ENCODE measurements at regions of chr13 and their contacts with region 1.

Region 1: DNA sequence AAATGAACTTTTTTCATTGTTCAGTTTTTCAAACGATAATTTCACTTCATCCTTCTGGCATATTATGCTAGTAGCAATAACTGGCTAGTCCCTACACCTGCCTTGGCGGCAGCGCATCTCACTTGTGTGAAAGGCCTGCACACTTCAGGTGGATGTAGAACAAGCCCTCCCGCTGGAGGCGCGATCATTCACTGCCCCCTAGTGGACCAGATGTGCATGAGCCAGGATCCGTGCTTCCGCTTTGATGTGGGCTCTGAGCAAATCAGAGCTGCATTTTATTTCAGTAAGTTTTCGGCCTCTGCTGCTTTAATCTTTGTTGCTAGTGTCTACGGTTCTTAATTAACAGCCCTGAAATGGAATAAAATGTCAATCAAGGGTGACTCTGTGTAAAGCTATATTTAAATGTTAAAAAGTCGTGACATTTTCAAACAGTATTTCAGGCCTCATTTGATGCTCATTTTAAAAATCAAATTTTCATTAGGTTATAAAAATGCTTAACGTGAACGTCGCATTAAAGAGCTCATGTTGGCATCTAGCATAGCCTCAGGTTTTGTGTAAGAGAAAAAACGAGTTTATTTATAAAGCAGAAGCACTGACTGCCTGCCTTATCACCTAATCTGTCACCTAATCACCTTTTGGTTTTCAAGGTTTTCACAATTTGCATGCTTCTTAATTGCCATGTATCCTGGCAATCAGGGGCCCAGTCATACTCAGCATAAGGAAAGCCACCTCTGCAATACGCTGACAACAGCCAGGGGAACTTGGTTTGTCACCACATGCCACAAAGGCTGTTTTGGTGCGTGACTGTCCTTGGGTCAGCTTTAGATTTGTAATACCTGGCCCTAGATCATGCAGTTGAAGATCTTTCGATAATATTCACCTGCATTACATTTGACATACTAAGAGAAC is 112.2 kb downstream of the TEX26 start:
- DNase-seq: peak; percentile 84
- CTCF ChIP-seq: peak; percentile 97

Region 2: DNA sequence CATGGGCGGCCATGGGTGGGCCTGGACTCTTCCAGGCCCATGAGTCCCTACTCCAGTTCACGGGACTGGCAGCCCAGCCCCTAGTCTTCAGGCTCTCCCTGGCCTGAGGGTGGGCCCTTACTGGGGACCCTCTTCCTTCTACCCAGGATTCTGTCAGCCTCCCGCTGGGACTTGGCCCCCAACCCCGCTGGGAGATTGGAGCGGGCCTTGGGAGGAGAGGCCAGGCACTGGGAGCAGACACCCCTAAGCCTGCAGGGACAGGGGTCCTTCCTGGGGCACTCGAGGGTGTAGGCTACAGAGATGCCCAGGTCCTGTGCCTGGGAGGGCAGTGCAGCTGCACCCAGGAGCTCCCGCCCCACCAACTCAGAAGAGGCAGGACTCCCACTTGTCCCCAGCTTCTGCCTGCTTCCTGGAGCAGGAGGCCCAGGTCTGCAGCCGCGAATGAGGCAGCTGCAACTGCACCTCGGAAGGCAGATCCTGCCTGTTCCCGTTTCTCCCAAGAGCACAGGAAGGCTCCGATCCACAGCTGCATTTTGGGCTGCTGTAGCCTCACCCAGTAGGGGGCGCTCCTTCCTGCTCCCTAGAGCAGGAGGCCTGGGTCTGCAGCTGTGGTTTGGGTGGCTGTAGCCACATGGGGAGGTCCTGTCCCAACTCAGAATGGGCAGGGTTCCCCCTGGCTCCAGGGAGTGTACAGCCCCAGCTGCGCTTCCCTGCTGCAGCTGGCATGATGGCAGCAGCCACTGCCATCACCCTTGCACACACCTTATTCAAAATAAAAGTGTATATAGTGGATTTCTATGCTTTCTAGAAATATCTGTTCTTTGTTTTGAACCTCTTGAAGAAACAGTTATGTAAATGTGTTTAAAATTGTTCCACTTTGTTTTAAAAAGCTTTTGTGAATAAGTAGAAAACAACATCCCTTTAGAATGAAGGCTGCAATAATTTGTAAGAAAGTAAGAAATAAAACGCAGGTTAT is 65.4 kb before region 1 on chr13:
- CTCF ChIA-PET with region 1: interaction called, 60 read pairs
- POLR2A ChIA-PET with region 1: no interaction called
- DNase-seq: peak; percentile 35
- CTCF ChIP-seq: peak; percentile 84

Region 3: GRCh38 chr13:31014456-31014855 is 30.2 kb before region 1 on chr13:
- CTCF ChIA-PET with region 1: interaction called, 13 read pairs
- POLR2A ChIA-PET with region 1: no interaction called
- DNase-seq: no peak
- CTCF ChIP-seq: no peak

Region 4: GRCh38 chr13:31022288-31022895 is 22.2 kb before region 1 on chr13:
- CTCF ChIA-PET with region 1: interaction called, 14 read pairs
- POLR2A ChIA-PET with region 1: no interaction called
- DNase-seq: no peak
- CTCF ChIP-seq: no peak

Region 5: DNA sequence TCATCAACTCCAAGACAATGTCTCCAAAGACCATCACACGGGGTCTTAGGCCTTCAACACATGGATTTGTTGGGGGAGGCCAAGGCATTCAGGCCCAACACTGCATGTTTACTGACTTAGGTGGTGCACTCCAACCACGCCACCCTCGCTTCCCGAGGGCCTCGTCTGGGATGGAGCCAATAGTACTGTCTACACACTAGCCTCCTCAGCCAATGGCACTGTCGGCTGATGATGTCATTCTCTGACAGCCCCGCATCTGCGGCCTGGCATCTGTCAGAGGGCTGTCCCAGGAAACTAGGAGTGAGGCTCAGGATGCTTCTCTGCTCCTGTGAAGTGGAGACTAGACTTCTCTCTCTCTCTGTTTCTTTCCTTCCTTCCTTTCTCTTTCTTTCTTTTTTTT is 15.5 kb before region 1 on chr13:
- CTCF ChIA-PET with region 1: interaction called, 23 read pairs
- POLR2A ChIA-PET with region 1: interaction called, 4 read pairs
- DNase-seq: no peak
- CTCF ChIP-seq: no peak

Region 6: DNA sequence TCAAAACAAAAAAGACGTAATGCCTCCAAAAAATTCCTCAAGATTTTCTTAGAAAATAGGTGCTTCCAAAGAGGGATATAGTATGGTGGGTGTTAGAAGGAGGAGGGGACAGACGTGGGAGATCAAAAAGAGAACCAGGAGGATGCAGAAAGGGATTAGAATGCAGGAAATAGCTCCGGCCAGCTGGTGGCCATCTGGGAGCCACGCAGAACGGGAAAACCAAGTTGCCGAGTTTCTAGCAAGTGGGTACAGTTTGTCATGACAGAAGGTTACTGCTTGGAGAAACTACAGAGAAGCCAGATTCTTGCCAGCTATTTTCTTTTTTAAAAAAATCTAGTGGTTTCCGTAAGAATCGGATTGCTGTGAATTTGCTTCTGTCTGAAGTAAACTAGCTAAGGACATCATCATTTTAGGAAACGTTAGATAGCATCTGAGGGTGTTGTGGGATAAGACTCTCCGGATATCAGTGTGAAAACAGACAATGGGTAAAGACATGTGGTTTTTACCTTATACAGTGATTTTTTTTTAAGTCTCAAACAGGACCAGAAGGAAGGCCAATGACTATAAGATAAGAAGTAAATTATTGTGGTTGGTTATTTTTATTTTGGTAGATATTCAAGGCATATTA is 12.1 kb after region 1 on chr13:
- CTCF ChIA-PET with region 1: interaction called, 13 read pairs
- POLR2A ChIA-PET with region 1: no interaction called
- DNase-seq: no peak
- CTCF ChIP-seq: no peak

Region 7: GRCh38 chr13:31069808-31070544 is 25.3 kb after region 1 on chr13:
- CTCF ChIA-PET with region 1: interaction called, 10 read pairs
- POLR2A ChIA-PET with region 1: no interaction called
- DNase-seq: no peak
- CTCF ChIP-seq: no peak

Region 8: DNA sequence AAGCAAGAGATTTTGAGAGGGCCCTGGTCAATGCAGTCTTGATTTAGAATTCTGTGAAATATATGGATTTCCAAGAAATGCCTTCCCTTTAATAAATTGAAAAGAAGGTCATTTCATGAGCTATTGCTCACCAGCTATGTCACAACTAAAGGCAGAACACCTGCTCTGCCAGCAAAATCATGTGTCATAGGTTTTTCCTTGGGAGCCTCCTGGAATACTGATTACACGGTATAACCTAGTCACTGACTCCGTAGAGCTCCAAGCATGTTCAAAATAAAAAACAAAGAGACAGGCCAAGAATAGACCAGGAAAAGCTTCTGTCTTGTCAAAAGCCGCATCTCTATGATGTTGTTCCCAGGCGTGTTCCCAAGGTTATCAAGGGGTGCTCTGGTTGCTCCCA is 71.6 kb after region 1 on chr13:
- CTCF ChIA-PET with region 1: no interaction called
- POLR2A ChIA-PET with region 1: no interaction called
- DNase-seq: no peak
- CTCF ChIP-seq: no peak